Activated naive CD4-positive, alpha-beta T cell treated with anti-CD3 and anti-CD28 coated beads for 36 hours (primary cell): ENCODE measurements at regions of chr6 and their contacts with region 1.

Region 1: GRCh38 chr6:132768051-132768517 is 10.4 kb upstream of the VNN2 start:
- DNase-seq: peak; percentile 44
- H3K4me3 Mint-ChIP-seq: no peak overlapping the region
- H3K27ac Mint-ChIP-seq: no peak overlapping the region
- H3K4me1 Mint-ChIP-seq: peaks cover 19% of the 10 kb centered on the region
- H3K27me3 Mint-ChIP-seq: no peaks in the 10 kb centered on the region

Region 2: DNA sequence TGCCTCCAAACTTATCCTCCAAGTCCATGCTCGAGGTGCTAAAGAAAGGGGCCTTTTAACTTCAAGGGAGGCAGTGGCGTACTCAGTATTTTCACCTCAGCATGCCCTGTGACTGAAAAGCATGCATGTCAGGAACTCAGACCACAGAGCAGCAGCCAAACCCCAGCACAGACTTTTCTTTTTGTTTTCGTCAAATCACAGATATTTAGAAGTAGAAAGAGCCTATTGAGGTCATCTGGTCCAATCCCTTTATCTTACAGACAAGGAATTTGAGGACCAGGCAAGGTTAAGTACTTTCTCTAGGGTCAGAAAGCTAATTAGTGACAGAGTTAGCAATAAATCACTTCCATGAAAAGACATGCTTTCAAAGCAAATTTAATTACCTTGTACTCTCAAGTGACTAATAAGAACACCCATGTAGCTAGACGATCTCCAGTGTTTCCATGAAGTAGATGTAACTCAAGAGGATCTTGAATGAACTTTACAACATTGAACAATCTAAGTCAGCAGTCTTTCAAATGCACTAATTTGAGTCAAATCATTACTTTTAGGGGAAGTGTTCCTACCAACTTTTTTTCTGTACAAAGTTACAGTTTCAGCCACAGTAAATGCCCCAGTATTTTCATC is 402.7 kb before region 1 on chr6:
- CTCF ChIA-PET with region 1: no interaction called
- intact Hi-C with region 1: loop called (anchors 5 kb)
- DNase-seq: peak; percentile 5
- H3K4me3 Mint-ChIP-seq: no peak overlapping the region
- H3K27ac Mint-ChIP-seq: no peak overlapping the region
- H3K4me1 Mint-ChIP-seq: peaks cover 17% of the 10 kb centered on the region
- H3K27me3 Mint-ChIP-seq: peaks cover 28% of the 10 kb centered on the region

Region 3: DNA sequence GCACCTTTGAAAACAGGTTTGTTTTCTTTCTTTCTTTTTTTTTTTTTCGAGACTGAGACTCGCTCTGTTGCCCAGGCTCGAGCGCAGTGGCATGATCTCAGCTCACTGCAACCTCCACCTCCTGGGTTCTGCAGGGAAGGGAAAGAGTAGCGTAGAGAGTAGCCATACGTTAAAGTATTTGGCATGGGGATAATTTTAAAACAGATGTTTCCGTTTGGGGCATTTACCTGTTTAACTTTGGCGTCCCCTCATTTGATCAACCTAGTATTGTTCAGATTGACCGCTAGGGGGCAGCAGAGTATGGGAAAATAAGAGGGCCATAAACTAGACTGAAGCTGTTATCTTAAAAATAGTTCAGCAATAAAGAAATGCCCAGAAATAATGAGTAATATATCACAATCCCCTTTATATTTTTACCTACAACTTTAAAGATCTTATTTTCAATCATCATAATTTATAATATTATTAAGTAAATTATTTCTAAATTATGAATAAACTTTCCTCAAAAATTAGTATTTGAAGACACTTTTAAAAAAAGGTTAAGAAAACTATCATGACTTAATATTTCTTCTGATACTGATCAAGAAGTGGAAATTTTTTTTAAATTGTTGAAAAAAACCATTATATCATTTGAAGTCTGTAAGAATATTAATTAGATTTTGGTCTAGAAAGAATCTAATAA is 237.7 kb before region 1 on chr6:
- CTCF ChIA-PET with region 1: interaction called, 7 read pairs
- intact Hi-C with region 1: loop called (anchors 1 kb)
- DNase-seq: peak; percentile 81
- H3K4me3 Mint-ChIP-seq: no peak overlapping the region
- H3K27ac Mint-ChIP-seq: no peak overlapping the region
- H3K4me1 Mint-ChIP-seq: peaks cover 2% of the 10 kb centered on the region
- H3K27me3 Mint-ChIP-seq: peaks cover 7% of the 10 kb centered on the region

Region 4: GRCh38 chr6:132683543-132683942 is 84.5 kb before region 1 on chr6:
- CTCF ChIA-PET with region 1: no interaction called
- intact Hi-C with region 1: no loop called
- DNase-seq: no peak
- H3K4me3 Mint-ChIP-seq: no peak overlapping the region
- H3K27ac Mint-ChIP-seq: no peak overlapping the region
- H3K4me1 Mint-ChIP-seq: no peaks in the 10 kb centered on the region
- H3K27me3 Mint-ChIP-seq: peaks cover 12% of the 10 kb centered on the region

Region 5: DNA sequence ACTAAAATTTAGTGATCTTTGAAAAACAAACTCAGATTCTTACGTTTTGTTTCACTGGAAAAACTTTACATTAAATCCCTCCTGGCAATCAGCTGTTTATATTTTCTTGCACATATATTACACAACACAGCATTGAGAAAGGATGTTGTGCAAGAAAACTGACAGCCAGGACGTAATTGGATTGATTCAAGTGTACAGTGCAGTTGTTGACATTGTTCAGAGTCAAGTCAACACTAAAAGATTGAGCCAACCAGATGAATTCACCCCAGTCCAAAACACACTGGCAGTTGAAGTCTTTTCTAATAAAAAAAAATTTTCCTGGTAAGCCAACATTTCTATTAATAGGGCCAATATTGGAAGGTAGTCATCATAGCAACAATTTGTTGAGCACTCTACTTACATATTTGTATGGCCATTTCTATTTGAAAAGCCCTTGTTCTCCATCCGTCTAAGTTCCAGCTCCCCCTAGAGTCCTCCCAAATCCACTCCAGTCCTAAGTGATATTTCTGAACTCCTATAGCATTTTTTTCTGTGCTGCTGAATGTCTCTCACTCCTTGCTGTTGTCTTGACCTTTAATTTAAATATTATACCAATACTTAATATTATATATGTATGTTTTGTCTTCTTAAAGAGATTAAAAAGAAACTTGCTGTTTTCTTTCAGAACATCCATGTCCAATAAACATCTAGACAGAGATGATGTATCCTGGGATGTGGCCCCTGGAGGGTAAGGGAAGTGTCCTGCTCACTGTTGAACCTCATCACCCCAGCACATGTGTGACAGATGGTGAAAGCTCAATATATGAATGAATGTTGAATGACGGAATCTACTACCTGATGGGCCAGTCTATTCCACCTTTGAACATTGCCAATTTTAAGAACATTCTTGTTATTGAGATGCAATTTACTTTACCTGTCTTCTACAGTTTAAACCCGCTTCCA is 33.1 kb before region 1 on chr6:
- CTCF ChIA-PET with region 1: interaction called, 14 read pairs
- intact Hi-C with region 1: loop called (anchors 1 kb)
- DNase-seq: no peak
- H3K4me3 Mint-ChIP-seq: no peak overlapping the region
- H3K27ac Mint-ChIP-seq: no peak overlapping the region
- H3K4me1 Mint-ChIP-seq: peaks cover 27% of the 10 kb centered on the region
- H3K27me3 Mint-ChIP-seq: no peaks in the 10 kb centered on the region

Region 6: DNA sequence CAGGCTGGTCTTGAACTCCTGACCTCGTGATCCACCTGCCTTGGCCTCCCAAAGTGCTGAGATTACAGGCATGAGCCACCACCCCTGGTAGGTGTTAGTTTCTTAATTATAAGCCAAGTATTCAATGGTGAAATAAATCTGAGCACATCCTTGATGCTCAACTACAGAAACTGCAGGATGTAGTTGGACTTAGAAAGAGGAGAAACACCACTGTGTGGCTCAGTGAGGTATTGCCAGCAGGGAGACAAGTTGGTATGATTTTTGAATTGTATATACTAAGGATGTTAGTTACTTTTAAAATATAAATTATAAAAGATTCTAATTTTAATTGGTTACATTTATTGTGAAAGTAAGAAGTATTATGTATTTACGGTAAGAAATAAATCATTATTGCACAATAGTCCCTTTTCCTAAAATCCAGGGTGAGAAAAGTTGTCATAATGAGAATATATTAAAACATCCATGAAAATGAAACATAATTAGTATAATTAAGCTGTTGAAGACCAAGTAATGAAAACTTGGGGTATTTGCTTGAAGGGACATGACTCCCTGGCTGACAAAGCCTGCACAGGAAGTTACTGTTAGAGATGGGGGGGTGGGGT is 12.8 kb after region 1 on chr6:
- CTCF ChIA-PET with region 1: interaction called, 6 read pairs
- intact Hi-C with region 1: loop called (anchors 1 kb)
- DNase-seq: peak; percentile 27
- H3K4me3 Mint-ChIP-seq: no peak overlapping the region
- H3K27ac Mint-ChIP-seq: no peak overlapping the region
- H3K4me1 Mint-ChIP-seq: no peaks in the 10 kb centered on the region
- H3K27me3 Mint-ChIP-seq: no peaks in the 10 kb centered on the region

Region 7: GRCh38 chr6:132798869-132799538 is 30.9 kb after region 1 on chr6:
- CTCF ChIA-PET with region 1: interaction called, 16 read pairs
- intact Hi-C with region 1: loop called (anchors 1 kb)
- DNase-seq: peak; percentile 85
- H3K4me3 Mint-ChIP-seq: no peak overlapping the region
- H3K27ac Mint-ChIP-seq: no peak overlapping the region
- H3K4me1 Mint-ChIP-seq: peaks cover 18% of the 10 kb centered on the region
- H3K27me3 Mint-ChIP-seq: no peaks in the 10 kb centered on the region